ENCODE measurements at regions of chr15 and their contacts with region 1.

Region 1: DNA sequence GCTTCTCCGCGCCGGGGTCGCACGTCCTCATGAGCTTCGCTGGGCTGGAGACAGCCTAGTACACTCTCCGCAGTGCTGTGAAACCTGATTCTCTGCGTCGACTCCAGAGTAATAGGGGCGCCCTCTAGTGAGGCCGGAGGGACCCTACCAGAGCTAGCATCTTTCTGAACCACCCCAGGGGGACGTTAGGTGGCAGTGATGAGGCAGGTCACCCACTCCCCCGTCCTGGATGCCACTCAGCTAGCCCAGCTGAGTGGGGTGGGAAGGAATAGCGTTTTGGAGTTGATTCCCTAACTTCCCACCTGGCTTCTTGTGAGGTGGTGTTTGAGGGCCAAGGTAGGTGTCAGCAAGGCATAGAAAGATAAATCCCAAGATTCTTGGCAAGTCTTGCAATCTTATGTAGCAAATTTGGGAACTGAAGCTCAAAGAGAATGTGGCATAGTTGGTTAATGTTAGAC is 4.0 kb downstream of the DUOXA2 start:
- DNase-seq: peak; percentile 97
- H3K4me3 ChIP-seq: peak overlapping the region in 1 of 2 experiments; percentile 53; a peak in 1 of 4 replicates
- H3K27ac ChIP-seq: no peak overlapping the region
- H3K4me1 ChIP-seq: peaks cover 6 to 17% of the 10 kb centered on the region in 2 experiments; a peak in 3 of 4 replicates
- H3K27me3 ChIP-seq: peaks cover 25% of the 10 kb centered on the region
- CTCF ChIP-seq: peak; percentile 98
- EP300 ChIP-seq: no peak
- RAD21 ChIP-seq: peak; percentile 83

Region 2: DNA sequence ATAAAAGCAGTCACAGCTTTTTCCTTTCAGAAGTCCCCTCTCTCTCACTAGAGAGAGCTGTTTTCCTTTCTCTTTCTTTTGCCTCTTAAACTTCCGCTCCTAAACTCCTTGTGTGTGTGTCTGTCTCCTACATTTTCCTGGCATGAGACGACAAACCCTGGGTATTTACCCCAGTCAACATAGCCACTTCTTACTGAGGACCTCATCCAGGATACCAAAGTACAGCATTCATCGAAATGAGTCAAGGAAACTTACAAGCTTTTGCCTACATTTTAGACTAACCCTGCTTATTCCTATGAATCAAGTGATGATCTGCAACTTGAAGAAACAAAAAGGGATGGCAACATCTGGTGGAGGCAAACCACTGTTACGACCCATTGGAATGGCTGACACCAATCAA is 423.7 kb before region 1 on chr15:
- CTCF ChIA-PET with region 1: no interaction called
- POLR2A ChIA-PET with region 1: no interaction called
- DNase-seq: no peak
- H3K4me3 ChIP-seq: no peak overlapping the region
- H3K27ac ChIP-seq: no peak overlapping the region
- H3K4me1 ChIP-seq: no peaks in the 10 kb centered on the region
- H3K27me3 ChIP-seq: no peaks in the 10 kb centered on the region
- CTCF ChIP-seq: no peak
- EP300 ChIP-seq: no peak
- RAD21 ChIP-seq: no peak

Region 3: GRCh38 chr15:44971036-44971435 is 147.1 kb before region 1 on chr15:
- CTCF ChIA-PET with region 1: interaction called, 17 read pairs
- POLR2A ChIA-PET with region 1: no interaction called
- DNase-seq: no peak
- H3K4me3 ChIP-seq: no peak overlapping the region
- H3K27ac ChIP-seq: no peak overlapping the region
- H3K4me1 ChIP-seq: no peaks in the 10 kb centered on the region
- H3K27me3 ChIP-seq: no peaks in the 10 kb centered on the region; the same call in 1 of the 2 replicates
- CTCF ChIP-seq: no peak
- EP300 ChIP-seq: no peak
- RAD21 ChIP-seq: no peak

Region 4: DNA sequence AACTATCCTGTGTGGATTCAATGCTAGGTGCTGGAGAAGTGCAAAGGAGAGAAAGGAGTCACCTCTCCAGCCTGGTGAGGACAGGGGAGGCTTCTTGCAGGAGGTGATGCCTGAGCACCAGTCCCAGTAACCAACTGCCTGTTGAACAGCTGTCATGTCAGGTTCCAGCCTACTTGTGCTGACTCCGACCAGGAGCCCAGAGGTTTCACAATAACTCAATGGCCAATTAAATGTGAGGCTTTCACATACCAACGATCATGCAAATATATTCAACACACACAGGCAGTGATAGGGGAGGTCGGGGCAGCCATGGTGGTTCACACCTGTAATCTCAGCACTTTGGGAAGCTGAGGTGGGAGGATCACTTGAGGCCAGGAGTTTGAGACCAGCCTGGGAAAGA is 87.4 kb before region 1 on chr15:
- CTCF ChIA-PET with region 1: interaction called, 22 read pairs
- POLR2A ChIA-PET with region 1: no interaction called
- DNase-seq: no peak
- H3K4me3 ChIP-seq: no peak overlapping the region
- H3K27ac ChIP-seq: no peak overlapping the region
- H3K4me1 ChIP-seq: peaks cover 0 to 20% of the 10 kb centered on the region in 2 experiments; a peak in 3 of 4 replicates
- H3K27me3 ChIP-seq: no peaks in the 10 kb centered on the region
- CTCF ChIP-seq: no peak
- EP300 ChIP-seq: no peak
- RAD21 ChIP-seq: no peak

Region 5: DNA sequence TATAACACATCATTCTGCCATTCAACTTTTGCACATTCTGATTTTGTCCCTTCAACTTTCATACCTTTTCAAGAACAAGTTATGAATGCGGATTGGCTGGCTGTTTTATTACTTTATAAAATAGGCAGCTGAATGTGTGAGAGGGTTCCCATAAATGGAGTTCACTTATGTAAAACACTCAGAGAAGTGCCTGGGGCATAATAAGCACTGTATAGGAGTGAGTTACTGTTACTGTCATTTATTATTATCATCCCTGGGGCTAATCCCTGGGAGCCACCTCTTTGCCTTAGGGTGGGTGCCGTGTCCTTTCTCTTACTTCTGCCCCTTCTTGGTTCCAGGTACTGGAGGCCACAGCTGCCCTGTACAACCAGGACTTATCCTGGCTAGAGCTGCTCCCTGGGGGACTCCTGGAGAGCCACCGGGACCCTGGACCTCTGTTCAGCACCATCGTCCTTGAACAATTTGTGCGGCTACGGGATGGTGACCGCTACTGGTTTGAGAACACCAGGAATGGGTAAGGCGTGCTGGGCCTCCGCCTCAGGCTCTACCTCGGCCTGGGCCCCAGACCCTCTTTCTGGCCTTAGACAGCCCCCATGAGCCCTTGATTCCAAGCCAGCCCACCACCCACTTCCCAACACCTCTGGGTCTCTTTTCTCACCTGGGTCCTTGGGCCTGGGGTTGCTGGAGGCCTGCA is 22.5 kb after region 1 on chr15:
- CTCF ChIA-PET with region 1: interaction called, 14 read pairs
- POLR2A ChIA-PET with region 1: interaction called, 3 read pairs
- DNase-seq: no peak
- H3K4me3 ChIP-seq: no peak overlapping the region
- H3K27ac ChIP-seq: no peak overlapping the region
- H3K4me1 ChIP-seq: peaks cover 0 to 10% of the 10 kb centered on the region in 2 experiments; a peak in 1 of 4 replicates
- H3K27me3 ChIP-seq: no peaks in the 10 kb centered on the region
- CTCF ChIP-seq: no peak
- EP300 ChIP-seq: no peak
- RAD21 ChIP-seq: no peak

Region 6: DNA sequence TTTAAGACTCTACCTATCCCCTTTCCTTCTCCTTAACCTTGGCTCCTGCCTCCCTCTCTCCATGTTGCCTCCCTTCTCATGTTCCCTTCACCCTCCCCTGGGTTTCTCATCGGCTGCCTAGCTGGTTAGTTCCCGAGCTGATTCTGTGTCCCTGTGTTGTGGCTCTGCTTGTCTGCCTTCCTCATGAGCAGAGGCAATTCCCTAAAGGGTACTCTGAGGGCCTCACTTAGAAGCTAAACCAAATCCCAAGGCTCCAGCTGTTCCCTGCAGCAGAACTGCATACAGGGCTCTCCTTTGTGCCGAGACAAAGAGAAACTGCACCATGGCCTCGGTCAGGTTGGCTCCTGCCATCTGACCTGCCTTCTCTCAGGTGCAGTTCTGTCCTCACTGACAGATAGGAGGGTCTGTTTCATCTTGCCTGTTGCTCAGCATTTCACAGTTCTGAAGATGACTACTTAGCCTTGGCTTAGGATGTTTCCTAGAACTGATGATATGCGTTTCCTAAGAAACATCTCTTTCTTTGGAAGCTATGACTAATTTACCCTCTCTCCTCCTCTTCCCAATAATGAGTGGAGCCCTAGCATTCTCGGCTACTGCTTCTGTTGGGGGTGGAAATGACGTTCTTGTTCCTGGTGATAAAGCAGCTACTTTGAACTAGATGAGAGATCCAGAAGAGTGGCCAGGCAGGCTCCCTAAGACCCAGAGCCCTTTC is 38.7 kb after region 1 on chr15:
- CTCF ChIA-PET with region 1: interaction called, 26 read pairs
- POLR2A ChIA-PET with region 1: no interaction called
- DNase-seq: no peak
- H3K4me3 ChIP-seq: no peak overlapping the region
- H3K27ac ChIP-seq: no peak overlapping the region
- H3K4me1 ChIP-seq: peaks cover 0 to 2% of the 10 kb centered on the region in 2 experiments; a peak in 1 of 4 replicates
- H3K27me3 ChIP-seq: no peaks in the 10 kb centered on the region
- CTCF ChIP-seq: no peak
- EP300 ChIP-seq: no peak
- RAD21 ChIP-seq: no peak

Region 7: DNA sequence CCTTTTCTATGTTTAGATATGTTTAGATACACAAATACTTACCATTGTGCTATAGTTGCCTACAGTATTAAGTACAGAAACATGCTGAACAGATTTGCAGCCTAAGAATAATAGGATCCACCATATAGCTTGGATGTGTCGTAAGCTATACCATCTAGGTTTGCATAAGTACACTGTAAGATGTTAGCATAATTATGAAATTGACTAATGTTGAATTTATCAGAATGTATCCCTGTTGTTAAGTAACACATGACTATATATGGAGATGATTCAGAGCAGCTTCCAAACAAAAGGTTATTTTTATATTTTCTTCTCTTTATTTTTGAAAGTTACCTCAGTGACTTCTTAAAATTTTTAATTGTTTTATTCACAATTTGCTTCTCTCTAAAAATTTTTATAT is 136.2 kb after region 1 on chr15:
- CTCF ChIA-PET with region 1: no interaction called
- POLR2A ChIA-PET with region 1: no interaction called
- DNase-seq: no peak
- H3K4me3 ChIP-seq: no peak overlapping the region
- H3K27ac ChIP-seq: no peak overlapping the region
- H3K4me1 ChIP-seq: no peaks in the 10 kb centered on the region
- H3K27me3 ChIP-seq: no peaks in the 10 kb centered on the region
- CTCF ChIP-seq: no peak
- EP300 ChIP-seq: no peak
- RAD21 ChIP-seq: no peak

Measured in SK-N-SH (cell line).